HEK293 (cell line): ENCODE measurements at regions of chr1 and their contacts with region 1.

Region 1: GRCh38 chr1:204941421-204942338 is 71.0 kb downstream of the NFASC start:
- H3K4me3 ChIP-seq: no peak overlapping the region
- H3K27ac ChIP-seq: no peak overlapping the region
- H3K4me1 ChIP-seq: no peaks in the 10 kb centered on the region
- CTCF ChIP-seq: peak; percentile 80

Region 2: DNA sequence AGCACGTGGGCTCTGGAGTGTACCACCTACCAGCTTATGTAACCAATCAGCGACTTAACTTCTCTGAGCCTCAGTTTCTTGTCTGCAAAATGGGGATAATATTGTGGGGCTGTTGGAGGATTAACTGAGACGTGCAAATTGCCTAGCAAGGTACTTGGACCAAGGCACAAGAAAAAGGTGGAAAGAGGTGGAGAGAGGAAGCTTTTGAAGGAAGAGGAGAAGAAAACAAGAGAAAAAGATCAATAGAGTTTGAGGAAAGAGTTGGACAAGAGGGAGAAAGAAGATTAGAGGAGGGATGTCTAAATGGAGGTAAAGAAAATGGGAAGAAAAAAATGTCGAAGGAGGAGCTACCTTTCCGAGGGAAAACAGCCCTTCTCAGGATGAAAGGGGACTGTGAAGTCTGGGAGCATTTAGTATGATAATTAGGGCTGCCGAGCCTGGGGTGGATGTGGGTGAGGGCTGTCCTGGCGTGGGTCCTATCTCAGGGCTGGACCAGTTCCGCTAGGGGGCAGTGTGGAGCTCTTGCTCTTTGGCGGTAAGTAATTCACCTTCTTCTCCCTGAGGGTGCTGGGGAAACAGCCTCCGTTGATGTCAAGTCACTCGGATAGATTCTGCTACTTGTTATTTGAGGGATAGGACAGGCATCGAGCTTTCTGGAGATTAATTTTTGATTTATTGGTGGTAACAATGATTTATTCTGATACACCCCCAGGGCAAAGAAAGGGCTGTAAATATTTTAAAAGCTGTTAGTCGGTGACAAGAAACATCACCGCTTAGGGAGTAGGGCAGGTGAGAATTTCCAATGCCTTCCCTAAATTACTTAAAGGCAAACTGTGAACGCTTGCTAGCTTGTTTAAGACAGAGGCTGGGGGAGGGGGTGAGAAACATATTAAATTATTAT is 150.0 kb before region 1 on chr1:
- CTCF ChIA-PET with region 1: interaction called, 13 read pairs
- POLR2A ChIA-PET with region 1: no interaction called
- H3K4me3 ChIP-seq: no peak overlapping the region
- H3K27ac ChIP-seq: no peak overlapping the region
- H3K4me1 ChIP-seq: no peaks in the 10 kb centered on the region
- CTCF ChIP-seq: peak; percentile 42; the same call in 1 of the 2 replicates

Region 3: DNA sequence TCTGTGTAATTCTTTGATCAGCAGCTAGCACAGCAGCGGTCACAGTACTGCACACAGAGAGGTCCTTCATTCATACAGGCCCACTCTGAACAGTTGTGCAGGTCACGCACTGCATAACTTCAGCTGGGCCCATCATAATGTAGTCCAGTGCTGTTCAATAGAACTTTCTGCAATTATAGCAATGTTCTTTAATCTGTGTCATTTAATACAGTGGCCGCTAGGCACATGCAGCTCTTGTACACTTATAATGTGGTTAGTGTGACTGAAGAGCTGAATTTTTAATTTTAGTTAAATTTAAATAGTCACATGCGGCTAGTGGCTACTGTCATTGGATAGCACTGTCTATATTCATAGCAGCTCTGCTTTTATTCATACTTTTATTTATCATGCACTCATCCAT is 119.8 kb before region 1 on chr1:
- CTCF ChIA-PET with region 1: interaction called, 28 read pairs
- POLR2A ChIA-PET with region 1: no interaction called
- H3K4me3 ChIP-seq: no peak overlapping the region
- H3K27ac ChIP-seq: no peak overlapping the region
- H3K4me1 ChIP-seq: peaks cover 7% of the 10 kb centered on the region; the same call in 1 of the 2 replicates
- CTCF ChIP-seq: no peak

Region 4: DNA sequence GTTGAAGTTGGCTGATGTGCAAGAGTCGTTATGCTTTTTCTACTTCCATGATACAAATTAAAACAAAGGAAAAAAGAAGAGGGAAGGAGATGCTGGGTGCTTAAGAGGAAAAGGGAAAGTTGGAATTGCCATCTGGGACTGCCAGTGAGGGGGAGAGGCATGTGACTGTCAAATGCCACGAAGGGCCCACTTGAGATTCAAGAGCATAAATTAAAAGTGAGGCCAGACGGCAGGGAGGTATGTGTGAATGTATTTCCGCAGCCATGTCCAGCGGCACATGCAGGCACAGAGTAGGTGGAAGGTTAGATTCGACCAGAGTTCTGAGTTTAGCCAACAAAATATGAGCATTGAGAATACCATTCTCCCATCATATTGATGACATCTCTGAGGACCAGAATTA is 39.0 kb before region 1 on chr1:
- CTCF ChIA-PET with region 1: interaction called, 10 read pairs
- POLR2A ChIA-PET with region 1: no interaction called
- H3K4me3 ChIP-seq: no peak overlapping the region
- H3K27ac ChIP-seq: no peak overlapping the region
- H3K4me1 ChIP-seq: no peaks in the 10 kb centered on the region
- CTCF ChIP-seq: no peak

Region 5: DNA sequence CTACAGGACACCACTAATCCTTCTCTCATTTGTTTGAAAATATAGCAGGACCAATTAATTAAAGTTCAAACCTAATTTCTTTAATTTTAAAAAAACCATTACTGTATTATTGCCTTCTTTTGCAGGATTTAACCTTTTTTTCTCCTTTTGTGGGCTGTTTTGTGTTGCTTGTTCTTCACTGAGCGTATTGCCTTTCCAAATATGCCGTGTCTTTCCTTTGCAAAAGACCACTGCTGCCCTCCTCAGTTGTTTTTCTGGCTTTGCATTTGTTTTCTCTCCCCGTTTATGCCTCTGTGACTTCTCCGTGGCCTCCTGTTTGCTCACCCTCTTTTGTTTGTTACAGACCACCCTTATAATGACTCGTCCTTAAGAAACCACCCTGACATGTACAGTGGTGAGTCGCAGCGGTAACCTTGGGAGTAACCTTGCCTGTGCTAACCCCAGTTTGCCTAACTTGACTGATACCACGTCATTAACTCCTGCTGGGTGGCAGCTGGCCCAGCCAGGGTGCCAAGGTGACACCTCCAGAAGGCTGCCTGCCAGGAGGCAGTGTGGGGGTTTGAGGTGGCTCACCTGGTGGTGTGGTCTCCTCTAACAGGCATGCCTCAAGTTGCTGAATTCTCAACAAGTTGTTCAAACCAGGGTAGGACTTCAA is 20.2 kb after region 1 on chr1:
- CTCF ChIA-PET with region 1: interaction called, 28 read pairs
- POLR2A ChIA-PET with region 1: no interaction called
- H3K4me3 ChIP-seq: no peak overlapping the region
- H3K27ac ChIP-seq: no peak overlapping the region
- H3K4me1 ChIP-seq: no peaks in the 10 kb centered on the region
- CTCF ChIP-seq: no peak

Region 6: GRCh38 chr1:204975570-204976235 is 34.0 kb after region 1 on chr1:
- CTCF ChIA-PET with region 1: interaction called, 13 read pairs
- POLR2A ChIA-PET with region 1: no interaction called
- H3K4me3 ChIP-seq: no peak overlapping the region
- H3K27ac ChIP-seq: no peak overlapping the region
- H3K4me1 ChIP-seq: no peaks in the 10 kb centered on the region
- CTCF ChIP-seq: peak; percentile 84